Posterior vena cava (tissue), 2 donors: ENCODE measurements at regions of chr10 and their contacts with region 1.

Region 1: GRCh38 chr10:86371691-86372090 is 5.1 kb upstream of the GRID1 start:
- DNase-seq: no peak

Region 2: DNA sequence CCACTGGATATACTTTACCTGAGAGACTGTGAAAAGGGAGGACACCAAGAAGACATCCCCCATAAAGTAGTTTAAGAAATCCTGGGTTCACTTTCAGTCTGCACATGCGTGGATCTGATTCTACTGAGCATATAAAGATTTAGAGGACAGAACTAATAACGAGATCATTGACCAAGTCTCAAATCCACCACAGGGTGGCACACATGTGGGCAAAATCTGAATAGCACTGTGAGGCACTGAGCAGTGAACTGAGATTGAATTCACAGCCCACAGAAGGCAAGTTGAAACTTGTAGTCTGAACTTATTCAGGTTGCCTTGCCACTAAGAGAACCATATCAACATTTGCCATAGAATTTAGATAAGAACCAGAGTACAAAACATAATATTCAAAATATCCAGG is 823.7 kb before region 1 on chr10:
- intact Hi-C with region 1: loop called in 1 of 2 experiments (anchors 5 kb)
- DNase-seq: no peak

Region 3: DNA sequence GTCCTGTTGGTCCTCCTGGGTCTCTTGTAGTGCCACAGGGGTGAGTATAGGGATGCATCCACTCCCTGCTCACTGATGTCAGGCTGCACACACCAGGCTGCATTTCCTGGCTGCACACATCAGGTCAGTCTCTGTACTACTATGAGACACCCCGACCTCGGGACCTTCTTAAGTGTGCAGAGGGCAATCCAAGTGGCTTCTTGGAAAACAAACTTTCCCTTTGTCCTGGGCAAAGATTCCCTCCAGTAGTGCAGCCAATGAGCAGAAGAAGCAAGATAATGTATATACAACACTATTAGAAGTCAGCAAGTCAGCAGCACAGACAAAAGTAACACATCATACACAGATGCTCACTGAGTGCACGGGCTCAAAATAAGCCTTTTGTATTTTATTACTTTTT is 498.6 kb before region 1 on chr10:
- intact Hi-C with region 1: loop called in 1 of 2 experiments (anchors 5 kb)
- DNase-seq: no peak

Region 4: DNA sequence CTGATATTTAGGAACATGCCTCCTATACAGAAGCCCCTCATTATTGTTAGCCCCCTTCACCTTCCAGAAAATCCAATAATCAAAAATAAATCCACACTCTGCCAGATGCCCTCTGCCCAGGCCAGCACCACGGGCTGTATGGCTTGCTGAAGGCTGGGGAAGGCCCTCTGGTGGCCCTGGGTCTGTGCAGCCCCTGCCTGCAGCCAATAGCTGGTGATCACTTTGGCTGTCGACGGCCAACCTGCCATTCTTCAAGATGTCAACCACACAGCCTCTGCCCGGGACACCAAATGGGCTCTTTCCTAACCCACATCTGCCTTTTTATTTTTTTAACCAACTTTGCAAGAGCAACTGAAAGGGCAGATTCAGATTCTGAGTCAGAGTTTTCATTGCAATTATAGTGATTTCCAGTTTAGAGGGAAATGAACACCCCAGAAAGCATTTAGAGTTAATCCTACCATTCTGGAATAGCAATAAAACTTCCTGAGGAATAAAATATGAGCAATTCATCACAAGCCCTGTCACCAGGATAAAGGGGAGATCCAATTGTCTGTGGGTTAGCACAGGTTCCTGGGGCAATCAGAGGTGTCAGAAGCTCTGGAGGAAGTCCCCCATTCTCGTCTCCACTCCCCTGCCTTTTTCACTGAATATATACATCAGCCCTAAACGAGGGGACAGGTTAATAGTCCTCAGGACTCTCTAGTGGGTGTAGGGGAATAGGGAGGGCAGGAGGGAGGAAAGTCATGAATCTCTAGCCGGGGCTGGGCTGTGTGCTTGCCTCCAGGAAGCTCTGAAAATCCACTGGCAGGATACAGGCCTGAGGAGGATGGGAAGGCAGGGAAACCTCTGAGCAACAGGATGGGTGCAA is 216.4 kb before region 1 on chr10:
- intact Hi-C with region 1: no loop called
- DNase-seq: peak; percentile 18

Region 5: DNA sequence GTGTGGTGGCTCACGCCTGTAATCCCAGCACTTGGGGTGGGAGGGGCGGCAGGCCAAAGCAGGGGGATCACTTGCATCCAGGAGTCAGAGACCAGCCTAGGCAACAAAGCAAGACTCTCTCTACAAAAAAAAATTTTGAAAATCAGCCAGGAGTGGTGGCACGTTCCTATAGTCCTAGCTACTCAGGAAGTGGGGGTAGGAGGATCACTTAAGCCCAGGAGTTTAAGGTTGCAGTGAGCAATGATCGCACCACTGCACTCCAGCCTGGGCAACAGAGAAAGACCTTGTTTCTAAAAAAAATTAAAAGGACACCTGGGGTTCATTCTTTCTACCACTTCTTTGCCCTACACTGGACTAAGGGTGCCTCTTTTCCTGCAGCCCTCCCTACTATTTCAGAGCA is 134.8 kb after region 1 on chr10:
- intact Hi-C with region 1: no loop called
- DNase-seq: no peak

Region 6: GRCh38 chr10:86846088-86846487 is 474.4 kb after region 1 on chr10:
- intact Hi-C with region 1: no loop called
- DNase-seq: no peak

Region 7: GRCh38 chr10:87504640-87505365 is 1133.1 kb after region 1 on chr10 and contains the start of gene MINPP1:
- intact Hi-C with region 1: no loop called
- DNase-seq: peak; percentile 96
- total RNA-seq, gene MINPP1: 10.2 to 11.1 TPM